CD4-positive, alpha-beta T cell (primary cell): ENCODE measurements at regions of chr1 and their contacts with region 1.

Region 1: GRCh38 chr1:197924516-197925123 is 7.4 kb downstream of the LHX9 start:
- DNase-seq: peak in 5 of 14 experiments; percentile 34 to 73 (median 52)
- ATAC-seq: peak; percentile 77
- H3K4me3 ChIP-seq: no peak overlapping the region
- H3K4me3 Mint-ChIP-seq: no peak overlapping the region
- H3K27ac ChIP-seq: no peak overlapping the region
- H3K27ac Mint-ChIP-seq: no peak overlapping the region
- H3K4me1 ChIP-seq: peaks cover 21% of the 10 kb centered on the region
- H3K4me1 Mint-ChIP-seq: peaks cover 24% of the 10 kb centered on the region
- H3K27me3 ChIP-seq: peaks cover 58 to 73% of the 10 kb centered on the region in 2 experiments
- H3K27me3 Mint-ChIP-seq: peaks cover 92% of the 10 kb centered on the region
- CTCF ChIP-seq: peak; percentile 81

Region 2: DNA sequence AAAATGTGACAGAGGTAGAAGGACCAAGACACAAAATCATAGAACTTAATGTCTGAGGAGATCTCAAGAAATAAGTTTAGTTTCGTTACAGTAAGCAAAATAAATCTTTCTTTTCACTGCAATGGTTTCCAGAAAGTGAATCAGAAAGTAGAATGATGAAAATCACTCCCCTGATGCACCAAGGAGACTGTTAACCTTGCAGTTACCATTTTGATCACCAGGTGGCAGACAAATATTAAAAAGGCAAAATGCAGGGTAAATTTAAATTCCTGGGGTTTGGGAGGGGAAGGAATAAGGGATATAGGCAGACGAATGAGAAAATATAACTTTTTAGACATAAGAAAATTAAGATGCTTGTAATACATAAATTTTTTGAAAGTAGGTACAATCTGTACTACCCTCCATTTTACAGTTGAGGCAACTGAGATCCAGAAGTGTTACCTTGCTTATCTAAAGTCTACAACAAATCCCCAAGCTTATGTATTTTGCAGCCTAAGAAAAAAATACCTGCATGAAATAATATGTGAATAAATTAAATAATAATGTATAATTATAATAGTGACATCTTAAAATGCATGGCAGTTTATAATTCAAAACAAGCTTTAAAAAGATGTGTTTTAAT is 403.4 kb before region 1 on chr1:
- CTCF ChIA-PET with region 1: interaction called, 3 read pairs
- POLR2A ChIA-PET with region 1: no interaction called
- intact Hi-C with region 1: loop called (anchors 1 to 2 kb)
- DNase-seq: peak in 4 of 14 experiments; percentile 5 to 57 (median 50)
- ATAC-seq: peak; percentile 52
- H3K4me3 ChIP-seq: no peak overlapping the region
- H3K4me3 Mint-ChIP-seq: no peak overlapping the region
- H3K27ac ChIP-seq: no peak overlapping the region
- H3K27ac Mint-ChIP-seq: no peak overlapping the region
- H3K4me1 ChIP-seq: no peaks in the 10 kb centered on the region
- H3K4me1 Mint-ChIP-seq: no peaks in the 10 kb centered on the region
- H3K27me3 ChIP-seq: no peaks in the 10 kb centered on the region
- H3K27me3 Mint-ChIP-seq: no peaks in the 10 kb centered on the region
- CTCF ChIP-seq: peak; percentile 85

Region 3: GRCh38 chr1:197614916-197615692 is 309.5 kb before region 1 on chr1:
- CTCF ChIA-PET with region 1: no interaction called
- POLR2A ChIA-PET with region 1: no interaction called
- intact Hi-C with region 1: loop called (anchors 1 to 2 kb)
- DNase-seq: peak in 10 of 14 experiments; percentile 1 to 50 (median 6)
- ATAC-seq: peak; percentile 43
- H3K4me3 ChIP-seq: no peak overlapping the region
- H3K4me3 Mint-ChIP-seq: no peak overlapping the region
- H3K27ac ChIP-seq: no peak overlapping the region
- H3K27ac Mint-ChIP-seq: no peak overlapping the region
- H3K4me1 ChIP-seq: no peaks in the 10 kb centered on the region
- H3K4me1 Mint-ChIP-seq: peaks cover 5% of the 10 kb centered on the region
- H3K27me3 ChIP-seq: no peaks in the 10 kb centered on the region
- H3K27me3 Mint-ChIP-seq: no peaks in the 10 kb centered on the region
- CTCF ChIP-seq: peak; percentile 58

Region 4: GRCh38 chr1:198265073-198265661 is 340.5 kb after region 1 on chr1:
- CTCF ChIA-PET with region 1: no interaction called
- POLR2A ChIA-PET with region 1: no interaction called
- intact Hi-C with region 1: loop called in 1 of 2 experiments (anchors 10 kb)
- DNase-seq: no peak
- ATAC-seq: no peak
- H3K4me3 ChIP-seq: no peak overlapping the region
- H3K4me3 Mint-ChIP-seq: no peak overlapping the region
- H3K27ac ChIP-seq: no peak overlapping the region
- H3K27ac Mint-ChIP-seq: no peak overlapping the region
- H3K4me1 ChIP-seq: no peaks in the 10 kb centered on the region
- H3K4me1 Mint-ChIP-seq: peaks cover 31% of the 10 kb centered on the region
- H3K27me3 ChIP-seq: no peaks in the 10 kb centered on the region
- H3K27me3 Mint-ChIP-seq: no peaks in the 10 kb centered on the region
- CTCF ChIP-seq: no peak